GM10248 (cell line): ENCODE measurements at regions of chr6 and their contacts with region 1.

Region 1: GRCh38 chr6:110075406-110075805 is 97.3 kb downstream of the GPR6 start:
- DNase-seq: no peak
- CTCF ChIP-seq: no peak

Region 2: GRCh38 chr6:110090876-110091275 is 15.5 kb after region 1 on chr6:
- CTCF ChIA-PET with region 1: interaction called, 19 read pairs
- POLR2A ChIA-PET with region 1: no interaction called
- DNase-seq: no peak
- CTCF ChIP-seq: no peak